PC-3 (cell line): ENCODE measurements at regions of chr5 and their contacts with region 1.

Region 1: GRCh38 chr5:91641730-91642350 is 258.7 kb upstream of the ARRDC3 start:
- DNase-seq: peak; percentile 87
- ATAC-seq: peak; percentile 60
- H3K4me3 ChIP-seq: no peak overlapping the region
- H3K27ac ChIP-seq: no peak overlapping the region
- H3K4me1 ChIP-seq: no peaks in the 10 kb centered on the region
- H3K27me3 ChIP-seq: peaks cover 11% of the 10 kb centered on the region; the same call in 1 of the 2 replicates
- CTCF ChIP-seq: peak; percentile 79

Region 2: GRCh38 chr5:91499943-91500531 is 141.8 kb before region 1 on chr5:
- CTCF ChIA-PET with region 1: interaction called, 3 read pairs
- POLR2A ChIA-PET with region 1: no interaction called
- intact Hi-C with region 1: loop called (anchors 2 kb)
- DNase-seq: peak; percentile 82
- ATAC-seq: peak; percentile 75
- H3K4me3 ChIP-seq: no peak overlapping the region
- H3K27ac ChIP-seq: no peak overlapping the region
- H3K4me1 ChIP-seq: no peaks in the 10 kb centered on the region
- H3K27me3 ChIP-seq: no peaks in the 10 kb centered on the region
- CTCF ChIP-seq: peak; percentile 92

Region 3: DNA sequence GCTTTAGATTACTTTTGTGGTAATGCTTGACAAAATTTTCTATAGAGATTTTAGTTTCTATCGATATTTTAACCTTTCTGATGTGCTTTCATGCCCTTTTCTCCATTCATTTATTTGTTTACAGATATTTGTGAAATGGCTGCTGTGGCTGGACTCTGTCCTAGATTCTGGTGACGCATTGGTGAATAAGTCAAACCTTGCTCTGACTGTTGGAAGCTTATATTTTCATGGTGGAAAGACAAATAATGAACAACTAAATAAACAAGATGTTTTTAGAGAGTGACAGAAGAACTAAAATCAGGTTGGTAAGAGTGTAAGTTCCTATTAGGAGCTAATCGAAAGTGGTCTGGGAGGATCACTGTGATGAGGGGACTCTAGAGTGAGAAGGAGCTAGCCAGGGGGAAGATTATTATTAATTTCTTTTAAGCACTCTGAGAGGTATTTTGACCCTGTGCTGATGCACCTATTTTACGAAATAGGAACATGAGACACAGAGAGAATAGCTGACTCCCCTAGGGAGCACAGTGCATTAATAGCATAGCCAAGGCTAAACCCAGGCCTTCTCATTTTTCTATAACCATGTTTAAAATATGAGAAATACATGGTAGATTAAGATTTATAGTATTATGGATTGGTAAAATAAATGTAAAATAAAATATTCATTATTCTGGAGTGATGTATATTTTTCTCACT is 153.2 kb after region 1 on chr5:
- CTCF ChIA-PET with region 1: interaction called, 4 read pairs
- POLR2A ChIA-PET with region 1: no interaction called
- intact Hi-C with region 1: loop called (anchors 5 kb)
- DNase-seq: peak; percentile 97
- ATAC-seq: peak; percentile 91
- H3K4me3 ChIP-seq: peak overlapping the region; percentile 43
- H3K27ac ChIP-seq: peak overlapping the region; percentile 87
- H3K4me1 ChIP-seq: peaks cover 27% of the 10 kb centered on the region
- H3K27me3 ChIP-seq: no peaks in the 10 kb centered on the region
- CTCF ChIP-seq: no peak

Region 4: GRCh38 chr5:91824406-91824805 is 182.6 kb after region 1 on chr5:
- CTCF ChIA-PET with region 1: interaction called, 3 read pairs
- POLR2A ChIA-PET with region 1: no interaction called
- intact Hi-C with region 1: loop called (anchors 10 kb)
- DNase-seq: no peak
- ATAC-seq: no peak
- H3K4me3 ChIP-seq: no peak overlapping the region
- H3K27ac ChIP-seq: no peak overlapping the region
- H3K4me1 ChIP-seq: no peaks in the 10 kb centered on the region; the same call in 1 of the 2 replicates
- H3K27me3 ChIP-seq: peaks cover 8% of the 10 kb centered on the region; the same call in 1 of the 2 replicates
- CTCF ChIP-seq: no peak

Region 5: DNA sequence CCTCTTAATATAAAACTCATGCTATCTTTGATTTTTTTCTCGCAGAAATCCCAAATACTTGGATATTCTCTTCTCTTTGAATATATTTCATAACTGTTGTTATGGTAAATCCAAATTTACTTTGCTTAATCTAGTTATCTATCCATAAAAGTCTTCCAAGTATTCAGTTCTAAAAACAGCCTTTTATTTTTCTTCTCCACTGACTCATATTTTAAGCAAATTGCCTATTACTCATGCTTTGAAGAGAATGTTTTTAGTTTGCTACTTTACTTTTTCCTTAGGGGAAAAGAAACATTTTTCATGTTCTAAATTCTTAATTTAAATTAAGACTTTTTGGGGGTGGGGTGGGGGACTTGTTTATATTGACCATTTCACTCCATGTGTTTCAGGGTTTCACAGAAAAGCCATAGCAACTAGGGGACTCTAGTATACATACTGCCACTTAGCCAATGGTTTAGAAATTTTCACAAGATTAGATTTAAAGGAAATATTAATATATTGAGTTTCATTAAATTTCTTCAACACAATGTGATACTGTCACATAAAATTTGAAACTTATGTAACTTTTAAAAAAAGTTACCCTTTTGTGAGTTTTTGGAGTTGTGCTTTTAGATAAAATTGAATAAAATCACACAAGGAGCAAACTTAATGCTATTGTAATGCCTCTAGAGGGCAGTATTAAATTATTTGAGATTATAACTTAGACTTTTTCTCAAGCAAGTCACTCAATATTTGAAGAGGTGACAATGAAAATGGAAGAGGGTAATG is 287.1 kb after region 1 on chr5:
- CTCF ChIA-PET with region 1: interaction called, 3 read pairs
- POLR2A ChIA-PET with region 1: interaction called, 3 read pairs
- intact Hi-C with region 1: loop called (anchors 1 kb)
- DNase-seq: peak; percentile 67
- ATAC-seq: peak; percentile 72
- H3K4me3 ChIP-seq: no peak overlapping the region
- H3K27ac ChIP-seq: no peak overlapping the region
- H3K4me1 ChIP-seq: no peaks in the 10 kb centered on the region
- H3K27me3 ChIP-seq: peaks cover 4% of the 10 kb centered on the region; the same call in 1 of the 2 replicates
- CTCF ChIP-seq: peak; percentile 86

Region 6: DNA sequence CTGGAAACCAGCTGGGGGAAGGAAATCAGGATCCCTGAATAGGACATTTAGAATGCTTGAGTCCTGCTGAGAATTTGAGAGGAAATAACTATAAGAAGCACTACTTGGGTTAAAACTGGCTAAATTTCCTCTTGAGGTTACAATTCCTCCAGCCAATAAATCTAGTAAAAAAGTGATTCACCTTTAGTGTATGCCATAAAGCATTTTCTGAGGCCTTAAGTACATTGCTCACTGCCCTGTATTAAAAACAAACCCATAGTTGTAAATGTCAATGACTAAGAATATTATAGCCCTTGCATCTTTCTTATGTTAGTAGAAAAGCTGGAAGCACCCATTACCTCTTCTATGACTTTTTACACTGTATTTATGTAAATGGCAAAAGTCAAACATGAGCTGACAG is 375.9 kb after region 1 on chr5:
- CTCF ChIA-PET with region 1: no interaction called
- POLR2A ChIA-PET with region 1: no interaction called
- intact Hi-C with region 1: loop called (anchors 10 kb)
- DNase-seq: peak; percentile 95
- ATAC-seq: peak; percentile 98
- H3K4me3 ChIP-seq: no peak overlapping the region
- H3K27ac ChIP-seq: peak overlapping the region; percentile 55
- H3K4me1 ChIP-seq: peaks cover 32% of the 10 kb centered on the region
- H3K27me3 ChIP-seq: no peaks in the 10 kb centered on the region
- CTCF ChIP-seq: no peak

Region 7: DNA sequence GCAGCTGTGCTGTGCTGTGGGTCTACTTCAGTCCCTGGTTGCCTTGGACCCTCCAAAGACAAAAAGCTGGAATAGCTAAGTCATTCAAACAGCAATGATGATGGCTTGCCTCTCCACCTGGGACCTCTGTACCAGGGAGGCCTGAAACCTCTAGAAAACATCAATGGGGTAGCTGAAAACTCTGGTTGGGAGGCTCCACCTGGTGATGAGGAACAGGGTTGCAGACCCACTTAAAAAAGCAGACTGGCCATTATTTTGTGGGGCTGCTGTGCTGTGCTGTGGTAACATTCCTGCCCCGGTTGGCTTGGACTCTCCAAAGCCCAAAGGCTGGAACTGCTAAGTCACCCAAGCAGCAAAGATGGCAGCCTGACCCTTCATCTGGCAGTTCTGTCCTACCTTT is 580.6 kb after region 1 on chr5:
- CTCF ChIA-PET with region 1: interaction called, 3 read pairs
- POLR2A ChIA-PET with region 1: no interaction called
- intact Hi-C with region 1: loop called (anchors 1 kb)
- DNase-seq: peak; percentile 30
- ATAC-seq: peak; percentile 53
- H3K4me3 ChIP-seq: no peak overlapping the region
- H3K27ac ChIP-seq: no peak overlapping the region
- H3K4me1 ChIP-seq: no peaks in the 10 kb centered on the region
- H3K27me3 ChIP-seq: no peaks in the 10 kb centered on the region
- CTCF ChIP-seq: peak; percentile 54